ENCODE measurements at regions of chr6 and their contacts with region 1.

Region 1: DNA sequence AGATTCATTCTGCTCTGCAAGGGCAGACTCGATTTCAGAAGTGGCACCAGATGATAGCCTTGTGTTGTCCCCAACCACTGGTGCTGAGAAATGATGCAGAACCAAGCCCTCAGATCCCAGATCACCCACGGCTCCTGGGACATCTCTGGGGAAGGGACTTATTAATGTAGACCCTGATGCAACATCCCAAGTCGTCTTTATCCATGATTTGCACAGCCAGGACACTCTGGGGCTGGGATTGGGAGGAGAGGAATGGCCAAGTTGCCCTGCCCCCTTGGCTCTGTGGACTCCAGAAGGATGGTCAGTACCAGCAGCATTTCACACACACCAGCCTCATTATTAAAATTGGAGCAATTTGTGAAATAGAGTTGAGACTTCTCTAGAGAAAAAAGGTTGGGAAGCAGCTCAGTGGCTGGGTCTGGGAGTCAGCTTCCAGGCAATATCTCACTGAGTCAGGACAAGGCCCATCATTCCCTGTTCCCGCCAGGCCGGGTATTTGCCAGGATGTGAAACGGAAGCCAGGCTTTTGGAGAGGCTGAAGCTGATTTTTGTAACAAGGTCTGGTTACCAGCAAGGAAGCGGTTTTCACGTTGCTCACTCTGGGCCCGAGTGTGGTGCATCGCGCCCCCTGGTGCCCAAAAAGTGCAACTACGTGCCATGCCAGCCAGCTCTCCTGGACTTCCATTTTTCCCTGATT is 67.4 kb downstream of the ZBTB2 start:
- DNase-seq: peak; percentile 72 to 87
- H3K4me3 ChIP-seq: no peak overlapping the region
- H3K4me3 Mint-ChIP-seq: peak overlapping the region; percentile 24
- H3K27ac Mint-ChIP-seq: no peak overlapping the region
- H3K4me1 ChIP-seq: peaks cover 4% of the 10 kb centered on the region; the same call in 1 of the 2 replicates
- H3K4me1 Mint-ChIP-seq: no peaks in the 10 kb centered on the region
- H3K27me3 ChIP-seq: peaks cover 5% of the 10 kb centered on the region; the same call in 1 of the 2 replicates
- H3K27me3 Mint-ChIP-seq: peaks cover 8% of the 10 kb centered on the region
- CTCF ChIP-seq: peak; percentile 94 to 96

Region 2: GRCh38 chr6:151254451-151255081 is 69.4 kb before region 1 on chr6:
- CTCF ChIA-PET with region 1: interaction called, 4 read pairs
- POLR2A ChIA-PET with region 1: no interaction called
- intact Hi-C with region 1: loop called (anchors 5 kb)
- DNase-seq: peak in 1 of 2 experiments; percentile 39
- H3K4me3 ChIP-seq: no peak overlapping the region
- H3K4me3 Mint-ChIP-seq: peak overlapping the region; percentile 55
- H3K27ac Mint-ChIP-seq: peak overlapping the region; percentile 91
- H3K4me1 ChIP-seq: peaks cover 23% of the 10 kb centered on the region
- H3K4me1 Mint-ChIP-seq: peaks cover 7% of the 10 kb centered on the region
- H3K27me3 ChIP-seq: no peaks in the 10 kb centered on the region
- H3K27me3 Mint-ChIP-seq: no peaks in the 10 kb centered on the region
- CTCF ChIP-seq: no peak

Region 3: DNA sequence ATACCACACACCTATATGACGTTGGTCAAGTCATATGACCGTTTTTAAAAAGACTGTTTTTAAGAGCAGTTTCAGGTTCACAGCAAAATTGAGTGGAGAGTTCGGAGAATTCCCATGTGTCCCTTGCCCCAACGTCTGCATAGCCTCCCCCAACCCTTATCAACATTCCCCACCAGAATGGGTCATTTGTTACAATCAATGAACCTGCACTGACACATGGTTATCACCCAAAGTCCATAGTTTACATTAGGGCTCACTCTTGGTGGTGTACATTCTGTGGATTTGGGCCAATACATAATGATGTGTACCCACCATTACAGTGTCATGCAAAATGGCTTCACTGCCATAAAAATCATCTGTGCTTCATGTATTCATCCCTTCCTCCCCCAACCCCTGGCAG is 15.4 kb after region 1 on chr6:
- CTCF ChIA-PET with region 1: interaction called, 25 read pairs
- POLR2A ChIA-PET with region 1: no interaction called
- intact Hi-C with region 1: no loop called
- DNase-seq: no peak
- H3K4me3 ChIP-seq: no peak overlapping the region
- H3K4me3 Mint-ChIP-seq: no peak overlapping the region
- H3K27ac Mint-ChIP-seq: no peak overlapping the region
- H3K4me1 ChIP-seq: no peaks in the 10 kb centered on the region
- H3K4me1 Mint-ChIP-seq: no peaks in the 10 kb centered on the region
- H3K27me3 ChIP-seq: no peaks in the 10 kb centered on the region
- H3K27me3 Mint-ChIP-seq: no peaks in the 10 kb centered on the region
- CTCF ChIP-seq: no peak

Region 4: GRCh38 chr6:151400454-151400853 is 76.5 kb after region 1 on chr6:
- CTCF ChIA-PET with region 1: no interaction called
- POLR2A ChIA-PET with region 1: no interaction called
- intact Hi-C with region 1: no loop called
- DNase-seq: no peak
- H3K4me3 ChIP-seq: no peak overlapping the region
- H3K4me3 Mint-ChIP-seq: no peak overlapping the region
- H3K27ac Mint-ChIP-seq: no peak overlapping the region
- H3K4me1 ChIP-seq: peaks cover 16% of the 10 kb centered on the region
- H3K4me1 Mint-ChIP-seq: no peaks in the 10 kb centered on the region
- H3K27me3 ChIP-seq: no peaks in the 10 kb centered on the region
- H3K27me3 Mint-ChIP-seq: no peaks in the 10 kb centered on the region
- CTCF ChIP-seq: no peak